ENCODE measurements at regions of chr1 and their contacts with region 1.

Region 1: GRCh38 chr1:182604169-182605164 is at the start of gene RGS16:
- DNase-seq: peak; percentile 97 to 98
- ATAC-seq: peak; percentile 96
- H3K4me3 ChIP-seq: peak within 1 kb of the TSS; percentile 23 to 29
- H3K27ac ChIP-seq: no peak within 1 kb of the TSS
- H3K4me1 ChIP-seq: no peaks in the 10 kb centered on the region
- H3K27me3 ChIP-seq: no peaks in the 10 kb centered on the region
- total RNA-seq, gene RGS16: 9.2 to 20.9 TPM

Region 2: DNA sequence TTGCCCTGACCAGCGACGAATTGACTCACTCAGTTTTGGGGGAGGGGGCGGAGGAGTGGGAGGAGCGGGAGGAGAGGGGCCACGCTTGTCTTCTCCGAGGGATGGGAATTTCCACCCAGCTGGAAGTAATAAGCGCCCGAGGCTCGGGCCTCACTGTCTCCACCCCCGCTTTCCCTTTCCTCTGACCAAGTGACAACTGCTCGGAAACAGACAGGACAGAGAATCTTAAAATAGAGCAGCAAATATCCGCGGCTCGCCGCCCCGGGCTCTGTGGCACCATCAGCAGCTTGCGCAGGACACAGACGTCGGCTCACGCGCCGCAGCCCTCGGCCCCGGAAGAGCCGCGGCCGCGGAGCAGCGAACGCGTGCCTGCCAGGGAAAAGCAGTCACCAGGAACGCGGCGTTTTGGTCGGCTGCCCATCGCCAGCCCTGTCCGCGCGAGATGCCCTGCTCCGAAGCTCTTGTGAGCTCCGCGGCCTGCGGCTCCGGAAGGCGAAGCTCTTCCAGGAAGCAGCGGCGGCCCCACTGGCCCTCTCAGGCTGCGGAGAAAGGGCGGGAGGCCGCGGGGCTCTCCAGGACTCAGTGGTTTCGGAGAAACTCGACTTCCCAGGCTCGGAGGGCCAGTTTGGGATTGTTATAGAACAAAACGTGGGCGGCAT is 10.5 kb after region 1 on chr1:
- intact Hi-C with region 1: loop called in 1 of 2 experiments (anchors 1 kb)
- DNase-seq: peak; percentile 92 to 96
- ATAC-seq: peak; percentile 86
- H3K4me3 ChIP-seq: peak overlapping the region; percentile 22 to 44
- H3K27ac ChIP-seq: peak overlapping the region; percentile 89 to 91
- H3K4me1 ChIP-seq: no peaks in the 10 kb centered on the region
- H3K27me3 ChIP-seq: no peaks in the 10 kb centered on the region

Region 3: GRCh38 chr1:182677397-182678098 is 73.1 kb after region 1 on chr1:
- intact Hi-C with region 1: loop called (anchors 5 kb)
- DNase-seq: no peak
- ATAC-seq: no peak
- H3K4me3 ChIP-seq: no peak overlapping the region
- H3K27ac ChIP-seq: no peak overlapping the region
- H3K4me1 ChIP-seq: peaks cover 0 to 1% of the 10 kb centered on the region in 2 donors
- H3K27me3 ChIP-seq: no peaks in the 10 kb centered on the region

Region 4: GRCh38 chr1:182699393-182700350 is 95.2 kb after region 1 on chr1:
- intact Hi-C with region 1: loop called (anchors 5 kb)
- DNase-seq: peak in 1 of 2 donors; percentile 66
- ATAC-seq: peak; percentile 79
- H3K4me3 ChIP-seq: no peak overlapping the region
- H3K27ac ChIP-seq: peak overlapping the region in 1 of 2 donors; percentile 2
- H3K4me1 ChIP-seq: peaks cover 0 to 12% of the 10 kb centered on the region in 2 donors
- H3K27me3 ChIP-seq: no peaks in the 10 kb centered on the region

Region 5: DNA sequence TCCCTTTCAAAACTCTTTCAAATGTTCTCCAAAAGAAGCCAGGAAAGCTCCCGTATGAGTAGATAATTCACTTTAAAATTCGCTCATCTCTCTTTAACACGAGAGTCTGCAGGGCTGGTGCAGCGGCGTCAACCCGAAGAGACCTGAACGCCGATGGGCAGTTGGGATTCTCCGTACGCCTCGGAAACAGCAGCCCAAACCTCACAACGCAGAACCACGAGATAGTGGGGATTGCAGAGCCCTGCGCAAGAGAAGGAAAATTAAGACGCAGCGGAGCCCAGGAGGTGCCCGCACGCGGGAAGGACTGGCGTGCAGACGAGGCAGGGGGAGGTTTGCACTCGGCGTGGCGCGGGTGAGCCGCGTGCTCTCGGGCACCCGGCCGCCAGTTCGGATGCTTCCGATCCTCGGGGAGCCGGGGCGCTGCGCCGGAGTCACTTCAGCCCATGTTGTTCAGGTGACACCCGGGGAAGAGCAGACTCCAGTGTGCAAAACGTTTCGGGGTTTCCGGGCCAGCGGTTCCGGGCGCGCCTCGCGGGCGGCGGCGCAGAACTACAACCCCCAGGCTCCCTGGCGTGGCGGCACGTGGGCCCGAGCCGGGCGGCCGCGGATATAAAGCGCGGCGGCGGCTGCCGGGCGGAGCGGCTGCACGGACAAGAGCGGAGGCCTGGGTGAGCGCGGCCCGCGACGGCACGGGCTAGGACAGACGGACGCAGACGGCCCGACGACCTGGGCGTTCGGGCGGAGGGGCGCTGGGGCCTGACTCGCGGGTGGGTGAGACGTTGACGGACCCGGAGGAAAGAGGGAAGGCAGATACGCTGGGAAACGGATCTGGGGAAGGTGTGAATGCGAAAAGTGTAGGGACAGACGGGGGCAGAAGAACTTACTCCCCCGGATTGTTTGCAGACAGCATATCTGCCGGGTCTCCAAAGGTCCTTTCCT is 184.9 kb after region 1 on chr1 and contains the start of gene NPL:
- intact Hi-C with region 1: loop called (anchors 1 to 2 kb)
- DNase-seq: peak; percentile 92 to 95
- ATAC-seq: peak; percentile 97
- H3K4me3 ChIP-seq: peak within 1 kb of the TSS; percentile 49 to 59
- H3K27ac ChIP-seq: no peak within 1 kb of the TSS
- H3K4me1 ChIP-seq: no peaks in the 10 kb centered on the region
- H3K27me3 ChIP-seq: no peaks in the 10 kb centered on the region
- total RNA-seq, gene NPL: 16.1 to 36.6 TPM

Measured in aorta (tissue), 5 donors.